ENCODE measurements at regions of chr1 and their contacts with region 1.

Region 1: GRCh38 chr1:155167166-155168104 is 5.7 kb downstream of the KRTCAP2 start:
- ATAC-seq: peak; percentile 61 to 83 (median 70)
- H3K4me3 ChIP-seq: peak overlapping the region in 2 of 5 donors; percentile 7 to 12
- H3K27ac ChIP-seq: peak overlapping the region; percentile 5 to 69
- H3K4me1 ChIP-seq: peaks cover 16 to 21% of the 10 kb centered on the region in 2 donors

Region 2: DNA sequence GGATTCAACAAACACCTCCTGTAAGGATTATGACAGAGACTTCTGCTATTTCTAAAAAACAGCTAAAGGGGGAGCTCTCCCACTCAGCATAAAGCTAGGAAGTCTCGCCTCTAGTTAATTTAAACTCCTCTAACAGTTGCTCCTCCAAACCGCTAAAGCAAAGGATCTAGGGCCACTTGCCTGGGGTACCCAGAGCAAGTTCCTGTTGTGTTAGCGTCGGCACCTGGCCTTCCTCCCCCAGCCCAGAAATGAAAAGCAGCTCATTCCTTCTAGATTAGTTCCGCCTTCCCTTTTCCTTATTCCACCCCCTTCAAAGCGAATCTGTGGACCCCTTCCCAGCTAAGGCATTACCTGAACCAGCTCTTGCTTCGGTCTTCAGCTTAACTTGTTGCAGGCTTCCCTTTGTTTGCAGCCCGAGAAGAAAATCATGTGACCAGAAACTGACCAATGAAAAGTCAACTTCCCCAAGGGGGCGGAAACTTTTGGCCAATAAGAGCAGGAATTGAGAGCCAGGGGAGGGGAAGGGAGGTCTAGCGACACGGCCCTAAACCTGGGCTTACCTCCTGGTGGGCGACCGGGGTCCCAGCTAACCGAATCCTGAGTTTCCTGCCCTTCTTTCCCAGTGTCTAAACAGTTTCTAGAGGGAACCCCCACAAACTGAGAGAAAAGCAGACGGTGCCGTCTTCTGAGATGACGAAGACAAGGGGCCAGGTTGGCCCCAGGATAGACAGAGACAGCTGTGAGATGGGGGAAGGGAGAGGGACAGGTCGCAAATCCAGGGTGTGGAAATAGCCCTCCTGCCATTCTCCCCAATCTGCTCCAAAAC is 211.5 kb before region 1 on chr1 and contains the start of gene PBXIP1:
- in situ Hi-C with region 1: no loop called
- ATAC-seq: peak; percentile 32 to 78 (median 64)
- H3K4me3 ChIP-seq: peak within 1 kb of the TSS; percentile 24 to 42 (median 34)
- H3K27ac ChIP-seq: peak within 1 kb of the TSS; percentile 39 to 43
- H3K4me1 ChIP-seq: peaks cover 32 to 36% of the 10 kb centered on the region in 2 donors
- total RNA-seq, gene PBXIP1: 12.4 to 156 (median 30.8) TPM

Region 3: GRCh38 chr1:155063550-155064110 is 103.8 kb before region 1 on chr1 and contains the start of gene EFNA4:
- in situ Hi-C with region 1: no loop called
- ATAC-seq: peak; percentile 60 to 89 (median 66)
- H3K4me3 ChIP-seq: peak within 1 kb of the TSS; percentile 38 to 72 (median 54)
- H3K27ac ChIP-seq: peak within 1 kb of the TSS; percentile 53 to 71
- H3K4me1 ChIP-seq: peaks cover 15 to 21% of the 10 kb centered on the region in 2 donors
- total RNA-seq, gene EFNA4: 5.4 to 10.9 (median 7.7) TPM

Region 4: DNA sequence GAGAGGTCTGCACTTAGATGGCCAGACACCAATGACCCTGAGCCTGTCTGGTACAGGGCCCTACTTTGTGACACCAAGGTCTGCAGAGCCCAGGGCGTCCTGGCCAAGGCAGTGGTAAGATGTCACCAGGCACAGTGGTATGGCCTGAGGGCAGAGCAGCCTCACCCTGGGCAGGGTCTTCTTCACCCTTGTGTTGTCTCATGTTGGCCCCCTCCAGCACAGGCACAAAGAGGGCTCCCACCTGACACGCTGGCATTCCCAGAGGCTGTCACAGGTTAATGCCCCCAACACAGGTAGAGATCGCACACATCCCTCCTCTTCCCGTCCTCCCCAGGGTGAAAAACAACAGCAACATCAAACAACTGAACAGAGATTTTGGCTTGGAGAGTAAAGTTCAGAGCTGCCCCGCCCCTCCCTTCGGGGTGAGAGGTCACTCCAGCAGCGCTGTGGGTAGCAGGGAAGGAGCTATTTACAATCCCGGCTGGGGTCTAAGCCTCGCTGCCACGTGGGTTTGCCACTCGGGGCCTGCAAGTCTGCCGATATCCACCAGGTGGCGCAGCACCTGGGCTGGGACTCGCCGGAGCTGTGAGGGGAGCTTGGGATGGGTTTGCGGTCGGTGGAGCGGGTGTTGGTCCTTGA is 76.2 kb before region 1 on chr1:
- in situ Hi-C with region 1: loop called in 4 of 9 experiments (anchors 5 to 10 kb)
- ATAC-seq: peak; percentile 65 to 89 (median 74)
- H3K4me3 ChIP-seq: peak overlapping the region in 1 of 5 donors; percentile 3
- H3K27ac ChIP-seq: no peak overlapping the region
- H3K4me1 ChIP-seq: peaks cover 5 to 18% of the 10 kb centered on the region in 2 donors

Region 5: DNA sequence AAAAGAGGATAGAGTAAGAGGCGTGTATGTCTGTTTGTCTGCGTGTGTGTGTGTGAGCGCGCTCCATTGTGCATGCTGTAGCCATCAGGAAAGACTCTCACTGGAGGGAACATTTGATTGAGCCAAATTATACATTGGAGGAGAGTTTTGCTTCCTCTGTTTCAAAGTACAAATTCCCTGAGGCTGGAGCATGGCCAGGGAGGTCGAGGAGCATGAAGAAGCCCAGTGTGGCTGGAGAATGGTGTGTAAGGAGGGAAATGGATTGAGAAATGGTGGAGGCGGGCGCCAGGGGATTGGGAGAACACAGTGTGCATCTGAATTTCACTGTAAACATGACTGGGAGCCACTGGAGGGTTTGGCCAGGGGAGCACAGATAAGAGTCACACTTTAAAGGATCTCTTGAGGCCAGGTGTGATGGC is 61.8 kb before region 1 on chr1:
- in situ Hi-C with region 1: loop called in 1 of 9 experiments (anchors 10 kb)
- ATAC-seq: no peak
- H3K4me3 ChIP-seq: no peak overlapping the region
- H3K27ac ChIP-seq: no peak overlapping the region
- H3K4me1 ChIP-seq: no peaks in the 10 kb centered on the region